CD4-positive, alpha-beta memory T cell (primary cell): ENCODE measurements at regions of chr6 and their contacts with region 1.

Region 1: GRCh38 chr6:75208298-75209183 is 2.7 kb upstream of the COL12A1 start:
- DNase-seq: peak; percentile 73 to 78 (median 74)
- H3K4me3 ChIP-seq: peak overlapping the region; percentile 24 to 30
- H3K4me3 Mint-ChIP-seq: peak overlapping the region; percentile 70 to 91 (median 82)
- H3K27ac ChIP-seq: no peak overlapping the region
- H3K27ac Mint-ChIP-seq: peak overlapping the region in 4 of 7 donors; percentile 48 to 87 (median 54)
- H3K4me1 ChIP-seq: peaks cover 50% of the 10 kb centered on the region
- H3K4me1 Mint-ChIP-seq: peaks cover 35 to 54% (median 47%) of the 10 kb centered on the region in 4 donors
- H3K27me3 ChIP-seq: peaks cover 32% of the 10 kb centered on the region
- H3K27me3 Mint-ChIP-seq: peaks cover 51 to 62% of the 10 kb centered on the region in 2 donors

Region 2: GRCh38 chr6:73675466-73676098 is 1533.0 kb before region 1 on chr6:
- CTCF ChIA-PET with region 1: interaction called, 36 read pairs
- POLR2A ChIA-PET with region 1: no interaction called
- intact Hi-C with region 1: loop called (anchors 1 kb)
- DNase-seq: peak; percentile 52 to 66 (median 53)
- H3K4me3 ChIP-seq: no peak overlapping the region
- H3K4me3 Mint-ChIP-seq: no peak overlapping the region
- H3K27ac ChIP-seq: no peak overlapping the region
- H3K27ac Mint-ChIP-seq: peak overlapping the region in 1 of 7 donors; percentile 45
- H3K4me1 ChIP-seq: no peaks in the 10 kb centered on the region
- H3K4me1 Mint-ChIP-seq: peaks cover 0 to 3% (median 2%) of the 10 kb centered on the region in 4 donors
- H3K27me3 ChIP-seq: no peaks in the 10 kb centered on the region
- H3K27me3 Mint-ChIP-seq: peaks cover 13 to 16% of the 10 kb centered on the region in 2 donors

Region 3: GRCh38 chr6:73739096-73739495 is 1469.4 kb before region 1 on chr6:
- CTCF ChIA-PET with region 1: interaction called, 281 read pairs
- POLR2A ChIA-PET with region 1: interaction called, 3 read pairs
- intact Hi-C with region 1: loop called (anchors 1 kb)
- DNase-seq: peak in 4 of 5 donors; percentile 51 to 59 (median 53)
- H3K4me3 ChIP-seq: no peak overlapping the region
- H3K4me3 Mint-ChIP-seq: no peak overlapping the region
- H3K27ac ChIP-seq: no peak overlapping the region
- H3K27ac Mint-ChIP-seq: no peak overlapping the region
- H3K4me1 ChIP-seq: no peaks in the 10 kb centered on the region
- H3K4me1 Mint-ChIP-seq: no peaks in the 10 kb centered on the region
- H3K27me3 ChIP-seq: no peaks in the 10 kb centered on the region
- H3K27me3 Mint-ChIP-seq: peaks cover 1% of the 10 kb centered on the region in 2 donors

Region 4: GRCh38 chr6:73854998-73855718 is 1353.4 kb before region 1 on chr6:
- CTCF ChIA-PET with region 1: interaction called, 89 read pairs
- POLR2A ChIA-PET with region 1: no interaction called
- intact Hi-C with region 1: loop called (anchors 1 kb)
- DNase-seq: peak; percentile 36 to 49 (median 47)
- H3K4me3 ChIP-seq: no peak overlapping the region
- H3K4me3 Mint-ChIP-seq: no peak overlapping the region
- H3K27ac ChIP-seq: no peak overlapping the region
- H3K27ac Mint-ChIP-seq: peak overlapping the region in 1 of 7 donors; percentile 29
- H3K4me1 ChIP-seq: no peaks in the 10 kb centered on the region
- H3K4me1 Mint-ChIP-seq: peaks cover 0 to 2% (median 0%) of the 10 kb centered on the region in 4 donors
- H3K27me3 ChIP-seq: no peaks in the 10 kb centered on the region
- H3K27me3 Mint-ChIP-seq: no peaks in the 10 kb centered on the region

Region 5: DNA sequence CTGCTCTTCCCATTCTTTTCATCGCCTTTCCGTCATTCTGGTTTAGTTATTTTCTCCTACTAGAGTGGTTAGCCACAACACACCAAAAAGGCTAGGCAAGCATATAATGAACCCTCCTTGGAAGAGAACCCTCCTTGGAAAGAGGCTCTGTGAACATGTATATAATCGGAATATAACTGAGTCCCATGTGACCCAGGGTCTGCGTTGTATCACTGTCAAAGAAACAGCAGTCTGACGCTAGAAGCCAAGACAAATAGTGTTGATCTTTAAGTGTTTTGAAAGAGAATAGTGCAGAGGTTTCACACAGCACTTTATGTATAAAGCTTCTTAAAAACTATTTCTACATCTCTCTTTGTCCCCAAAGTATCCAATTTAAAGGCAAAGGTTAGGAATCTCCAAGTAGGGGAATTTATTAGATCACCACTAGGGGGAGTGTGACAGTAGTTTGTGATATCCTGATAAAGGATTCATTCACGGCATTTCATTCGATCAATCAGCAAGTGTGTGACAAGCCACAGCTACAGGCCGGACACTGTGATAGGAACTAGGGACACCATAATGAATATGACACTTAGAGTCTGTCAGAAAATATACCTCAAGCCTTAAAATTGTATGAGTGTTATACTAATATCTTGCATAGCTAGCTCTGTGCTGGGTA is 1117.3 kb before region 1 on chr6:
- CTCF ChIA-PET with region 1: interaction called, 80 read pairs
- POLR2A ChIA-PET with region 1: no interaction called
- intact Hi-C with region 1: no loop called
- DNase-seq: peak in 2 of 5 donors; percentile 7 to 14
- H3K4me3 ChIP-seq: no peak overlapping the region
- H3K4me3 Mint-ChIP-seq: no peak overlapping the region
- H3K27ac ChIP-seq: no peak overlapping the region
- H3K27ac Mint-ChIP-seq: no peak overlapping the region
- H3K4me1 ChIP-seq: no peaks in the 10 kb centered on the region
- H3K4me1 Mint-ChIP-seq: no peaks in the 10 kb centered on the region
- H3K27me3 ChIP-seq: no peaks in the 10 kb centered on the region
- H3K27me3 Mint-ChIP-seq: peaks cover 1 to 8% of the 10 kb centered on the region in 2 donors

Region 6: DNA sequence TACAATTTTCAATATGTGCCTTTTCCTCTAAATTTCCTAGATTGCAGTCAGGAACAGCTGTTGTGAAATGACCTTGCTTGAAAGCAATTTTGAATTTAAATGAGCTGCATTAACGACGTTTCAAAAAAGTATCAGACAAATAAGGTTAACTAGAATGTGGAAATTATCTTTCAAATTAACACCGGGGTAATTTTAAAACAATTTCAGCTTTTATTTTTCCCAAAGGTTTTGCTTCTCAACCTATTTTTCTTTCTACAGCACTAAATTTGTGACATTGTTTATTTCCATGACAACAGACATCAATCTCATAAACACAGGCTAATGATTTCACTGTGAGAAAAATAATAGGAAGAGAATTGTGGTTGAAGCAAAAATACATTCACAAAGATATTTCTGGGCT is 41.2 kb before region 1 on chr6:
- CTCF ChIA-PET with region 1: no interaction called
- POLR2A ChIA-PET with region 1: no interaction called
- intact Hi-C with region 1: no loop called
- DNase-seq: no peak
- H3K4me3 ChIP-seq: no peak overlapping the region
- H3K4me3 Mint-ChIP-seq: no peak overlapping the region
- H3K27ac ChIP-seq: no peak overlapping the region
- H3K27ac Mint-ChIP-seq: no peak overlapping the region
- H3K4me1 ChIP-seq: no peaks in the 10 kb centered on the region
- H3K4me1 Mint-ChIP-seq: no peaks in the 10 kb centered on the region
- H3K27me3 ChIP-seq: no peaks in the 10 kb centered on the region
- H3K27me3 Mint-ChIP-seq: peaks cover 0 to 9% of the 10 kb centered on the region in 2 donors

Region 7: DNA sequence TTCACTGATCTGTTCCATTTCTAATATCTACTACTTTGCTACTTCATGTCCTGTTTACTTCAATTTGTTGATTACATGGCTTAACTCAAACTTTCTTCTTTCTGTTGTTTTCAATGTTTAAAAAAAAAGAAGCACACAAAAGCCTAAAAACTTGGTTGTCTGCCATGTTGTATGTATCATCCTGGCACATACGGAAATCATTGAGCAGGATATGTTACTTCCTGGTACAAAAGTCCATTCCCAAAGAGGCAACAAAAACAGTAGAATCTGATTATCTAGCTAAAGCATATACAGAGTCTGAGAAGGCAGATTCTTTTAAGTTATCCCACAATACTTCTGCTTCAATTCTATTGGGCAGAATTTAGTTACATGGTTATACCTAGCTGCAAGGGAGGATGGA is 11.8 kb after region 1 on chr6:
- CTCF ChIA-PET with region 1: interaction called, 57 read pairs
- POLR2A ChIA-PET with region 1: no interaction called
- intact Hi-C with region 1: no loop called
- DNase-seq: no peak
- H3K4me3 ChIP-seq: no peak overlapping the region
- H3K4me3 Mint-ChIP-seq: no peak overlapping the region
- H3K27ac ChIP-seq: no peak overlapping the region
- H3K27ac Mint-ChIP-seq: no peak overlapping the region
- H3K4me1 ChIP-seq: no peaks in the 10 kb centered on the region
- H3K4me1 Mint-ChIP-seq: no peaks in the 10 kb centered on the region
- H3K27me3 ChIP-seq: peaks cover 5% of the 10 kb centered on the region
- H3K27me3 Mint-ChIP-seq: peaks cover 23 to 34% of the 10 kb centered on the region in 2 donors

Region 8: DNA sequence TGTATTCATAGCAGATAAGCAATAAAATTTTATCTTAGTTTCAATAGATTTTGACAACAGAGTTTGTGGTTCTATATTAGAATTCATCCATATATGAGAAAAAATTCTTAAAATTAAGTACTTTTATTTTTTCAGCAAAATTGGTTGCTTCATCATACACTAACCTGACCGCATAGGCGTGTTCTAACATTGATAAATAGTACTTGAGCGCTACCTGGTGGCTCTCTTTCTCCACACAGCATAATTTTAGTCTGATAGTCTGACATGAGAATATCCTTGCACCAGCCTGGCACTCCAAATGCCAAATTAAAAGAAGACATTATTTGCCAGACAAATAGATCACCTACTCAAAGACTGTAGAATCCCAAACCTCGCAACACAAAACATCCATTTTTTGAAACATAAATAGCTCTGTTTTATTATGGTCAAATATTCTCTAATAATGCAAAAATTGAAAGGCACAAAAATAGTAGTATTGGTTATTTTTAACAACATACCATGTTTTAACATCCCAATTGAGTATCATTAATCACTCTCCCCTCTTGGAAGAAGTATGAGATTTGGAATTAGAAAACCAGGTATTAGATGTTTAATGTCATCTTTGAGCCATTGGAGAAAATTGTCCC is 318.1 kb after region 1 on chr6:
- CTCF ChIA-PET with region 1: interaction called, 4 read pairs
- POLR2A ChIA-PET with region 1: no interaction called
- intact Hi-C with region 1: loop called (anchors 1 kb)
- DNase-seq: peak; percentile 58 to 63 (median 58)
- H3K4me3 ChIP-seq: no peak overlapping the region
- H3K4me3 Mint-ChIP-seq: no peak overlapping the region
- H3K27ac ChIP-seq: no peak overlapping the region
- H3K27ac Mint-ChIP-seq: no peak overlapping the region
- H3K4me1 ChIP-seq: no peaks in the 10 kb centered on the region
- H3K4me1 Mint-ChIP-seq: no peaks in the 10 kb centered on the region
- H3K27me3 ChIP-seq: no peaks in the 10 kb centered on the region
- H3K27me3 Mint-ChIP-seq: peaks cover 18 to 19% of the 10 kb centered on the region in 2 donors